ENCODE measurements at regions of chr2 and their contacts with region 1.

Region 1: GRCh38 chr2:217438821-217439220 is 564.0 kb downstream of the TNS1 start:
- DNase-seq: no peak
- H3K4me3 ChIP-seq: no peak overlapping the region
- H3K27ac ChIP-seq: no peak overlapping the region
- H3K4me1 ChIP-seq: peaks cover 0 to 9% (median 7%) of the 10 kb centered on the region in 4 experiments; a peak in 5 of 7 replicates
- H3K27me3 ChIP-seq: no peaks in the 10 kb centered on the region
- CTCF ChIP-seq: no peak
- EP300 ChIP-seq: no peak
- POLR2A ChIP-seq: no peak
- RAD21 ChIP-seq: no peak

Region 2: GRCh38 chr2:217456016-217456415 is 17.2 kb after region 1 on chr2:
- CTCF ChIA-PET with region 1: interaction called, 10 read pairs
- POLR2A ChIA-PET with region 1: no interaction called
- DNase-seq: no peak
- H3K4me3 ChIP-seq: no peak overlapping the region
- H3K27ac ChIP-seq: no peak overlapping the region
- H3K4me1 ChIP-seq: no peaks in the 10 kb centered on the region
- H3K27me3 ChIP-seq: no peaks in the 10 kb centered on the region
- CTCF ChIP-seq: no peak
- EP300 ChIP-seq: no peak
- POLR2A ChIP-seq: no peak
- RAD21 ChIP-seq: no peak

Region 3: DNA sequence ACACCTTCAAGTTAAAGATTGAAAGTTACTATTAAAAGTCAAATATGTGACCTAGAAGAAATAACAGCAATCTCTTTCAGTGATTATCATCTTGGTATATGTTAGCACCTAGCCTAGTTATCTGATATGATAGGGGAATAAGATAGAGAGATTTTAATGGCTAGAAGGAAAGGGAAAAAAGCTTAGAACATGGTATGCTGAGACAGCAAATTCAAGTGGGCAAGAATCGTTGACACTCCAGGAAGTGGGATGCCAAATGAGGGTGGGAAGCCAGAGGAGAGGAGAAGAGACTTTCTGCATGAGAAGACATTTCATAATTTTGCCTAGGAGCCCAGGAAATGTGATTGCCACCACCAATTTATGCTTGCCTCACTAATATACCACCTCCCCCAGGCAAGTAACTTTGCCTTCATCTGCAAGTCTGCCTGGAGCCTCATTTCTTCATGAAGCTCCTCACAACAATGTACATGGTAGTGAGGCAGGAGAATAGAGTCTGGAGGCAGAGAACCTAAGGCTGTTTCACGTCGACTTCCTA is 59.1 kb after region 1 on chr2:
- CTCF ChIA-PET with region 1: no interaction called
- POLR2A ChIA-PET with region 1: no interaction called
- DNase-seq: no peak
- H3K4me3 ChIP-seq: no peak overlapping the region
- H3K27ac ChIP-seq: no peak overlapping the region
- H3K4me1 ChIP-seq: no peaks in the 10 kb centered on the region
- H3K27me3 ChIP-seq: no peaks in the 10 kb centered on the region
- CTCF ChIP-seq: no peak
- EP300 ChIP-seq: no peak
- POLR2A ChIP-seq: no peak
- RAD21 ChIP-seq: no peak